ENCODE measurements at regions of chr4 and their contacts with region 1.

Region 1: GRCh38 chr4:85798012-85798770 is 323.2 kb downstream of the ARHGAP24 start:
- DNase-seq: no peak
- ATAC-seq: no peak
- H3K4me3 ChIP-seq: no peak overlapping the region
- H3K4me3 Mint-ChIP-seq: no peak overlapping the region
- H3K27ac ChIP-seq: no peak overlapping the region
- H3K27ac Mint-ChIP-seq: no peak overlapping the region
- H3K4me1 ChIP-seq: peaks cover 0 to 6% of the 10 kb centered on the region in 2 donors
- H3K4me1 Mint-ChIP-seq: peaks cover 17% of the 10 kb centered on the region
- H3K27me3 ChIP-seq: no peaks in the 10 kb centered on the region
- H3K27me3 Mint-ChIP-seq: no peaks in the 10 kb centered on the region
- CTCF ChIP-seq: no peak

Region 2: GRCh38 chr4:85084380-85085094 is 713.7 kb before region 1 on chr4:
- CTCF ChIA-PET with region 1: interaction called, 16 read pairs
- POLR2A ChIA-PET with region 1: no interaction called
- intact Hi-C with region 1: loop called (anchors 2 kb)
- DNase-seq: peak; percentile 74
- ATAC-seq: peak; percentile 60
- H3K4me3 ChIP-seq: no peak overlapping the region
- H3K4me3 Mint-ChIP-seq: no peak overlapping the region
- H3K27ac ChIP-seq: no peak overlapping the region
- H3K27ac Mint-ChIP-seq: no peak overlapping the region
- H3K4me1 ChIP-seq: no peaks in the 10 kb centered on the region
- H3K4me1 Mint-ChIP-seq: peaks cover 6% of the 10 kb centered on the region
- H3K27me3 ChIP-seq: peaks cover 0 to 6% (median 5%) of the 10 kb centered on the region in 4 experiments
- H3K27me3 Mint-ChIP-seq: peaks cover 8% of the 10 kb centered on the region
- CTCF ChIP-seq: peak; percentile 89

Region 3: GRCh38 chr4:85756938-85757337 is 41.3 kb before region 1 on chr4:
- CTCF ChIA-PET with region 1: interaction called, 11 read pairs
- POLR2A ChIA-PET with region 1: no interaction called
- intact Hi-C with region 1: loop called (anchors 5 kb)
- DNase-seq: no peak
- ATAC-seq: peak; percentile 36
- H3K4me3 ChIP-seq: no peak overlapping the region
- H3K4me3 Mint-ChIP-seq: no peak overlapping the region
- H3K27ac ChIP-seq: no peak overlapping the region
- H3K27ac Mint-ChIP-seq: no peak overlapping the region
- H3K4me1 ChIP-seq: peaks cover 0 to 7% of the 10 kb centered on the region in 2 donors
- H3K4me1 Mint-ChIP-seq: peaks cover 14% of the 10 kb centered on the region
- H3K27me3 ChIP-seq: no peaks in the 10 kb centered on the region
- H3K27me3 Mint-ChIP-seq: no peaks in the 10 kb centered on the region
- CTCF ChIP-seq: peak; percentile 31

Region 4: DNA sequence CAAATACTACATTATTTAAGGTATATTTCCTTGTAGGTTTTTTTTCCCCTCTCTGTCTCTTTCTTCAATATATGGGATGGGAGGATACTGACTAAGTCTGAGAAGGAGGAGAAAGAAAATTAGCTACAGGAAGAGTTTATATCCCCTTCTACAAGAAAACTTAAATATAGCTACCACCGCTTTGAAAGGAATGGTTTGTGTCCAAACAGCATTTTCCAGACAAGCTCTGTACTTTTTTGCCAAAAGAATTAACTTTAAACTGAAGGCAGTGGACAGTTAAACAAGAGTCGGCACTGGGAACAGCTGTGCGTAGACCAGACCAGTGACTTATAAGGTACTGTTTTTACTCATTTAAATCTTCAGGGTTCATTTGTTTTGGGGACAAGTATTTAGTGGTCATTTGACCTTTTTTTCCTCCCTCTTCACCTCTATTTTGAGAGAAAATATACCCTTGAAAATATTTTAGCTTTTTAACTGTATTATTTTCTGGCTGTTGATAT is 19.5 kb before region 1 on chr4:
- CTCF ChIA-PET with region 1: interaction called, 39 read pairs
- POLR2A ChIA-PET with region 1: no interaction called
- intact Hi-C with region 1: loop called (anchors 2 kb)
- DNase-seq: no peak
- ATAC-seq: peak; percentile 56
- H3K4me3 ChIP-seq: peak overlapping the region; percentile 2 to 68 (median 45)
- H3K4me3 Mint-ChIP-seq: peak overlapping the region; percentile 89
- H3K27ac ChIP-seq: peak overlapping the region; percentile 67 to 79
- H3K27ac Mint-ChIP-seq: peak overlapping the region; percentile 93
- H3K4me1 ChIP-seq: peaks cover 33 to 55% of the 10 kb centered on the region in 2 donors
- H3K4me1 Mint-ChIP-seq: peaks cover 66% of the 10 kb centered on the region
- H3K27me3 ChIP-seq: no peaks in the 10 kb centered on the region
- H3K27me3 Mint-ChIP-seq: no peaks in the 10 kb centered on the region
- CTCF ChIP-seq: no peak

Region 5: DNA sequence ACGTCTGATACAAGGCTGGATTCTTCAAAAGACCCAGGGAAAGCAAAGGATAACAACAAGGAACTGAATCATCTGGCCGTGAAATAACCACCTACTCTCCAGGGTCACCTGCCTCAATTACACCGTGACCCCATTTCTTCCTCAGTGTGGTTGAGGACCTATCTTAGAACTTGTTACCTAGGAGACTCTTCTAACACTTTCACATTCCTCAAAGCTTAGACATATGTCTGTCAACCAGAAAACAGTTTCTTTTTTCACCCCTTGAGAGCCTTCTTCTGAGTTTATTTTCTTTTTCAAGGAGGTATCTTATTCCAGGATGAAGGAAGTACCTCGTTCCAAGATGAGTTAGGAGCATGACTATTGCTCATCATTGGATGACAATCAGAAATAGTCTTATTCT is 14.6 kb after region 1 on chr4:
- CTCF ChIA-PET with region 1: interaction called, 22 read pairs
- POLR2A ChIA-PET with region 1: no interaction called
- intact Hi-C with region 1: no loop called
- DNase-seq: no peak
- ATAC-seq: no peak
- H3K4me3 ChIP-seq: no peak overlapping the region
- H3K4me3 Mint-ChIP-seq: no peak overlapping the region
- H3K27ac ChIP-seq: no peak overlapping the region
- H3K27ac Mint-ChIP-seq: no peak overlapping the region
- H3K4me1 ChIP-seq: no peaks in the 10 kb centered on the region
- H3K4me1 Mint-ChIP-seq: peaks cover 3% of the 10 kb centered on the region
- H3K27me3 ChIP-seq: no peaks in the 10 kb centered on the region
- H3K27me3 Mint-ChIP-seq: no peaks in the 10 kb centered on the region
- CTCF ChIP-seq: no peak

Region 6: GRCh38 chr4:86032476-86033022 is 234.4 kb after region 1 on chr4:
- CTCF ChIA-PET with region 1: no interaction called
- POLR2A ChIA-PET with region 1: no interaction called
- intact Hi-C with region 1: no loop called
- DNase-seq: no peak
- ATAC-seq: no peak
- H3K4me3 ChIP-seq: no peak overlapping the region
- H3K4me3 Mint-ChIP-seq: no peak overlapping the region
- H3K27ac ChIP-seq: no peak overlapping the region
- H3K27ac Mint-ChIP-seq: no peak overlapping the region
- H3K4me1 ChIP-seq: no peaks in the 10 kb centered on the region
- H3K4me1 Mint-ChIP-seq: no peaks in the 10 kb centered on the region
- H3K27me3 ChIP-seq: peaks cover 0 to 15% (median 3%) of the 10 kb centered on the region in 4 experiments
- H3K27me3 Mint-ChIP-seq: peaks cover 31% of the 10 kb centered on the region
- CTCF ChIP-seq: no peak